HEK293T (cell line): ENCODE measurements at regions of chr6 and their contacts with region 1.

Region 1: DNA sequence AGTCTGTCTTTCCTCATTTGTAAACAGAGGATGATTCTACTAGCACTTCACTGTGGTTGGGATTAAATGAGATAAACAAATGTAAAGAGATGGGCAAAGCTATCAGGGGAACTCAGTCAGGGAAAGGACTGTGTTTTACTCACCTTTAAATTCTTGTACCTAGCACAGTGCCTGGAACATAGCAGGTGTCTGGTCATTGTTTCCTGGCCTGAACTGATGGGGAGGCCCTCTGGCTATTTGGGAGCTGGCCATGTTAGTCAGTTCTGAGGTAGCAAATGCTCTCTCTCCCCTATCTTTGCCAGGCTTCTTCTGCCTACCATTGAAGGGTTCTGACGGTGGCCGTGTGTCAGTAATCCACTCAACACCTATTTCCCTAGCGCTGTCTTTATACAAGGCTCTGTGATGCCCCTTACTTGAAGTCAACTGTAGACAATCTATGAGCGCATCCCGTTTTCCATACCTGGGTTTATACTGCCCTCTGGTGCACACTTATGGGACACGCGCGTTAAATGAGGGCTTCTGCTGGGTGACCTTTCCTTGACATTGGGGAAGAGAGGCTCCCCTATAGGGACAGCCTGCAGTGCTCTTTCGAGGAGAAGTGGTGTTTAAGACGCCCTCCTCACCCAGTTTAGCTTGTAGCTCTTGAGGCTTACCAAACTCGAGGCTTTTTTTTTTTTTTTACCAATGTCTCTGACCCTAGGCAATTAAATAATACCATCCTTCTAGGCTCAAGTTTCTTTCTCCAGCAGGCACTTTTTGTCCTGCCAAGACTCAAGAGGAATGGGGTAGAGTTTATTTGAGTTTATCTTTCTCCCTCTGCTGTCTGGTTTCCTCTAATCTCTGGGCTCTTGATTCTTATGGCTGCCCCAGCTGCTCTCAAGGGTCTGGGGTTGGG is 4.0 kb upstream of the SPATS1 start:
- DNase-seq: peak; percentile 74

Region 2: DNA sequence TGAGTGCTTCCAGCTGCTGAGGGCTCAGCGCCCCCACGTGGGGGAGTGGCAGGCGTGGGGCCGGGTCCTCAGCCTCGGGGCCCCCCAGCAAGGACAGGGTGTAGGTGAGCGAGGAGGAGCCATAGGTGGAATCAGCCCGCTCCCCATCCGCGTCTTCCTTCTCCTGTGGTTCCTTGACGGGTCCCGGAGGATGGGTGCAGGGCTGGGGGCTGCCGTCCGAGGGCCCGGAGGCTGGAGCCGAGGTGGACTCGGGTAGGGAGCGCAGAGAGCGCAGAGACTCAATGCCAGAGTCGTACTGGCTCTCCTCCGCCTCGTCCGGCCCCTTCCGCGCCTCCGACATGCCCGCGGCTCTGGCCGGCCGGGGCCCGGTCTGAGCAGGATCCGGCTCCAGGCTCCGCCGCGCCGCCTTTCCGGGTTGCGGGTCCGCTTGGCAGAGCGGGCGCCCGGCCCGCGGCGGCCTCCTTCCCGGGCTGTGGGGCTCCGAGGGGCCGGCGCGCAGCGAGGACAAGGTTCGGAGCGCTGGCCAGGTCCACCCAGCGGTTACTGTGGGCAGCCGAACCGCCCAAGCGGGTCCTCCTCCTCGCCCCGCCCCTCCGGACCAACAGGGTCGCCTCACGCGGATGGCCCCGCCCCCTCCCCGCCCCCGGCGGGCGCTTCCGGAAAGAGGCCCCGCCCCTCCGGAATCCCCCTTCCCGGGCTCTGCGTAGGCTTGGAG is 73.3 kb before region 1 on chr6 and contains the start of gene NFKBIE:
- CTCF ChIA-PET with region 1: interaction called, 46 read pairs
- POLR2A ChIA-PET with region 1: no interaction called
- DNase-seq: peak; percentile 93

Region 3: GRCh38 chr6:44270526-44271405 is 67.7 kb before region 1 on chr6:
- CTCF ChIA-PET with region 1: interaction called, 46 read pairs
- POLR2A ChIA-PET with region 1: no interaction called
- DNase-seq: peak; percentile 39

Region 4: GRCh38 chr6:44312901-44313788 is 25.3 kb before region 1 on chr6 and contains the start of gene AARS2:
- CTCF ChIA-PET with region 1: interaction called, 15 read pairs
- POLR2A ChIA-PET with region 1: interaction called, 5 read pairs
- DNase-seq: peak; percentile 92

Region 5: DNA sequence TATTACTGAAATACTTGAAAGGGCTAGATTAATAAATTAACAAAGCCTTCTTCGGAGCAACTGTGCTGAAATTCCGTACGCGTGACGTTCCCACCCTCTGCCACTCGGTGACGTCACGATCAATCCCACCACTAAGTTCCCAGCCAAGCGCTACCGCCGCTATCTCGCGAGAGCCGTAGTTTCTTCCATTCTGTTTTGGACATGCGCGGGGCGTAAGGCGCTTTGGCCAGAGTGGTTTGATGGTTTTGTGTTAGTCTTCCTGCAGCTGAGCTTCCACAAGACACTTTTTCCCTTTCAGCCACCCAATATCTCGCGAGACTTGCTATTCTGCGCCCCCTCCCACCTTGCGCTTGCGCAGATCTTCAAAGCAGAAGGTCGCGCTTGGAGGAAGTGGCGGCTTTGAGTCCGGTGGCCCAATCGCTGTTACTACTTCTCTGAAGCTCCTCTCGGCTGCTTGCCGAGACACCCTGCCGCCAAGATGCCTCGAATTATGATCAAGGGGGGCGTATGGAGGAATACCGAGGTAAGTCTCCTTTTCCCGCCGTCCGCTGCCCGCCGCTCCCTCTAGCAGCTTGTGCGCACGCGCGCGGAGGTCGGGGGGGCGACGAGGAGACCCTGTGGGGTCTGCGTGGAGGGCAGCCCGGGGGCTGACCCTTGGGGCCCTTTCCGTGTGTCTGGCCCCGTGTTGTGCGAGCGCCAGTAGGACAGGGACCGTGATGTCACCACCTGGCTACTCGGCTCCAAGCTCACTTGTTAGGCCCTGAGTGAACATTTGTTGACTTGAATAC is 49.1 kb after region 1 on chr6 and contains the start of gene CDC5L:
- CTCF ChIA-PET with region 1: no interaction called
- POLR2A ChIA-PET with region 1: interaction called, 11 read pairs
- DNase-seq: peak; percentile 96